Activated T-helper 1 cell treated with anti-CD3 and anti-CD28 coated beads, Interleukin-12 subunit alpha, Interleukin-12 subunit beta, Interleukin-2, Interleukin-4 antibody, amounts not matched to agents 30 ng/mL and 10 ng/mL and 1 ng/mL, durations not matched to agents 14 hours and 24 hours and 36 hours (primary cell): ENCODE measurements at regions of chr3 and their contacts with region 1.

Region 1: GRCh38 chr3:45915518-45916231 is 27.6 kb upstream of the CXCR6 start:
- DNase-seq: peak; percentile 65
- H3K4me3 Mint-ChIP-seq: peak overlapping the region; percentile 58
- H3K27ac Mint-ChIP-seq: peak overlapping the region; percentile 83
- H3K4me1 Mint-ChIP-seq: peaks cover 33% of the 10 kb centered on the region
- H3K27me3 Mint-ChIP-seq: peaks cover 30% of the 10 kb centered on the region

Region 2: GRCh38 chr3:45665101-45665572 is 250.5 kb before region 1 on chr3:
- intact Hi-C with region 1: loop called (anchors 5 kb)
- DNase-seq: peak; percentile 34
- H3K4me3 Mint-ChIP-seq: peak overlapping the region; percentile 83
- H3K27ac Mint-ChIP-seq: peak overlapping the region; percentile 86
- H3K4me1 Mint-ChIP-seq: peaks cover 53% of the 10 kb centered on the region
- H3K27me3 Mint-ChIP-seq: no peaks in the 10 kb centered on the region

Region 3: GRCh38 chr3:45841757-45842491 is 73.8 kb before region 1 on chr3 and contains the start of gene LZTFL1:
- intact Hi-C with region 1: loop called (anchors 1 kb)
- DNase-seq: peak; percentile 81
- H3K4me3 Mint-ChIP-seq: peak within 1 kb of the TSS; percentile 90
- H3K27ac Mint-ChIP-seq: peak within 1 kb of the TSS; percentile 77
- H3K4me1 Mint-ChIP-seq: peaks cover 22% of the 10 kb centered on the region
- H3K27me3 Mint-ChIP-seq: peaks cover 26% of the 10 kb centered on the region
- total RNA-seq, gene LZTFL1: 5.2 and 6.5 TPM in 2 replicates

Region 4: DNA sequence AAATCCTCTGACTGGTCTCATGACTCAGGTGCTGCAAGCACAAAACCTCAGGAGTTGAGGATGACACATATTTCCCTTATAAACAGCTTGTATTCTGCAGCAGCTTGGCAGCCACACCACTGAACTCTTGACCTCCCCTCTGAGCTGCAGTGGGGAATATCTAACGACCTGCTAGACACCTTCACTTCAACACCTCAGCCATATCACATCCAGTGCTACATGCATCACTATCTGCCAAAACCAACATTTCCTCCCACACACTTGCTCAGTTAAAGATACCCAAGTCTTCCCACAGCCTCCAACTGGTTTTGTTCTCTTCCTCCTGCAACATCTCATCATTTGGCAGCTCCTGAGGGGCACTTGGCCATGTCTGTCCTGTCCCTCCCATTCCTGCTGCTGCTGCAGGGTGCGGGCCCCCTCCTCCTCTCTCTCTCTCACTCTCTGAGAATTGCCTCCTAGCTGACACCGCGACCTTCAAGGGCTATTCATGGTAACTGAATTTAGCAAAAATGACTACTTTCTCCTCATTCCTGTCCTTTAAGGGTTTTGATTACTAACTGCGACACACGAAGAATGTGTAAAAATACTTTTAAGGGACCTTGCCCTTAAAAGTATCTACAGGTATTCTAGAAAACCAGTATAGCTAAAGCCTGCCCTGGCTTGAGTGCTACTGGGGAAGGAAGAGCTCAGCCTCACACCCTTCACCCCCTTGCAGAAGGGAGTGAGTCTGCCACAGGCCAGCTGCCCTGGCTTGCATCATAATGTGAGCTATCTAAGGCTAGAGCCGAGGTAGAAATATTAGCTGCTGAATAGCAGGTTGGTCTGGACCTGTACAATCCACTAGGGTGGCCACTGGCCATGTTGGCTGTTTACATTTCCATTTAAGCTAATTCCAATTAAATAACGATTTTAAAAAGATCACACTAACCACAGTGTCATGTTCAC is 34.3 kb before region 1 on chr3:
- intact Hi-C with region 1: loop called (anchors 1 kb)
- DNase-seq: no peak
- H3K4me3 Mint-ChIP-seq: no peak overlapping the region
- H3K27ac Mint-ChIP-seq: peak overlapping the region; percentile 3
- H3K4me1 Mint-ChIP-seq: peaks cover 24% of the 10 kb centered on the region
- H3K27me3 Mint-ChIP-seq: peaks cover 42% of the 10 kb centered on the region

Region 5: DNA sequence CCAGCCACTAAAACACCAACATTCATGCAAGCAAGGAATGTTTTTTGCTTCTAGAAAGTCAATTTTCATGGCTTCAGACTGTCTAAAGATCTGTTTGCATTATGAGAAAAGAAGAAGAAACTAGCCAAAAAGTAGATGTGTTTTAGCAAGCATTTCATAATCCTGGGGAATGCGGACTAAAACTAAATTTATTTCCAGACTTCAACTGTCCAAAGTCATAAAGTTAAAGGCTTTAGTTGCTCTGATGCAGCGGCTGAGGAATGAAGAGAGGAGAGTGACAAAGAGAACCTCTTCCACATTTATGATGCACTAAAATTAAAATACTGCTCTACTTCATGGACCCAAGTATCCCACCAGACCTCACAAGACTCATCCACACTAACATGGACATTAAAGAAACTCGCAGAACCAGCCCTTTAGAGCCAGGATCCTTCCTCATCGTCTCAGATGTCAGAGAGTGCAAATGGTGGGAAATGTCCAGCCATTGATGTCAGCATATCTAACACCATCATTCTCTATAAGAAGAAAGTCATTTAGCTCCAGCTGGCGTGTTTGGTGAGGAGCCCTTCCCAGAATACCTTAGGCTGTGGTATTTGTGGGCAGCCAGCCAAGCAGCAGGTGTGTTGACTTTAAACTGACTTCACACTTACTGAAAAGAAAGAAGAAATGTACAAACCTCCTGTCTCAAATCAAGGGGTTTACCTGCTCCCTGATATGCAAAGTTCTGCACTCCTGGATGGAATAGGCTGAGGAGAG is 62.5 kb after region 1 on chr3:
- intact Hi-C with region 1: loop called (anchors 1 kb)
- DNase-seq: peak; percentile 72
- H3K4me3 Mint-ChIP-seq: peak overlapping the region; percentile 86
- H3K27ac Mint-ChIP-seq: peak overlapping the region; percentile 98
- H3K4me1 Mint-ChIP-seq: peaks cover 89% of the 10 kb centered on the region
- H3K27me3 Mint-ChIP-seq: no peaks in the 10 kb centered on the region

Region 6: GRCh38 chr3:46006238-46007032 is 90.8 kb after region 1 on chr3:
- intact Hi-C with region 1: no loop called
- DNase-seq: no peak
- H3K4me3 Mint-ChIP-seq: no peak overlapping the region
- H3K27ac Mint-ChIP-seq: no peak overlapping the region
- H3K4me1 Mint-ChIP-seq: peaks cover 11% of the 10 kb centered on the region
- H3K27me3 Mint-ChIP-seq: peaks cover 6% of the 10 kb centered on the region

Region 7: DNA sequence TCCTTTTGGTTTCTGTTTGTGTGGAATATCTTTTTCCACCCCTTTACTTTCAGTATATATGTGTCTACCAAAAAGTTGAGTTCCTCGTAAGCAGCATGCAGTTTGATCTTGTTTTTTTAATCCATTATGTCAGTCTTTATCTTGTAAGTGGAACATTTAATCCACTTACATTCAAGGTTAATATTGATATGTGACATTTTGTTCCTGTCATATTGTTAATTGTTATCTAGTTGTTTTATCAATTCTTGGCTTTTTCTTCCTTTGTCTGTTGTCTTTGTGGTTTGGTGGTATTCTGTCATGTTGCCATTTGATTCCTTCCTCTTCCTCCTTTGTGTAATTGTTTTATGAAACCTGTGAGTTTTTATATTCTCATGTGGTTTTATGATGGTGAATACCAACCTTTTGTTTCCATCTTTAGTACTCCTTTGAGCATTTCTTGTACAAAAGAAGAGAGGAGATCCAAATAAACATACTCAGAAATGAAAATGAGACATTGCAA is 155.0 kb after region 1 on chr3:
- intact Hi-C with region 1: loop called (anchors 1 kb)
- DNase-seq: no peak
- H3K4me3 Mint-ChIP-seq: peak overlapping the region; percentile 53
- H3K27ac Mint-ChIP-seq: peak overlapping the region; percentile 96
- H3K4me1 Mint-ChIP-seq: peaks cover 70% of the 10 kb centered on the region
- H3K27me3 Mint-ChIP-seq: peaks cover 12% of the 10 kb centered on the region

Region 8: GRCh38 chr3:46214751-46215352 is 299.2 kb after region 1 on chr3:
- intact Hi-C with region 1: no loop called
- DNase-seq: no peak
- H3K4me3 Mint-ChIP-seq: no peak overlapping the region
- H3K27ac Mint-ChIP-seq: no peak overlapping the region
- H3K4me1 Mint-ChIP-seq: peaks cover 40% of the 10 kb centered on the region
- H3K27me3 Mint-ChIP-seq: no peaks in the 10 kb centered on the region